Colonic mucosa (tissue), 4 donors: ENCODE measurements at regions of chr18 and their contacts with region 1.

Region 1: GRCh38 chr18:80034068-80034851 is at the start of gene RBFA:
- DNase-seq: peak; percentile 100
- H3K4me3 ChIP-seq: peak within 1 kb of the TSS; percentile 80
- H3K27ac ChIP-seq: peak within 1 kb of the TSS; percentile 74
- H3K4me1 ChIP-seq: peaks cover 4% of the 10 kb centered on the region
- H3K27me3 ChIP-seq: no peaks in the 10 kb centered on the region
- CTCF ChIP-seq: peak; percentile 51
- total RNA-seq, gene RBFA: 16.3 to 18.4 TPM

Region 2: DNA sequence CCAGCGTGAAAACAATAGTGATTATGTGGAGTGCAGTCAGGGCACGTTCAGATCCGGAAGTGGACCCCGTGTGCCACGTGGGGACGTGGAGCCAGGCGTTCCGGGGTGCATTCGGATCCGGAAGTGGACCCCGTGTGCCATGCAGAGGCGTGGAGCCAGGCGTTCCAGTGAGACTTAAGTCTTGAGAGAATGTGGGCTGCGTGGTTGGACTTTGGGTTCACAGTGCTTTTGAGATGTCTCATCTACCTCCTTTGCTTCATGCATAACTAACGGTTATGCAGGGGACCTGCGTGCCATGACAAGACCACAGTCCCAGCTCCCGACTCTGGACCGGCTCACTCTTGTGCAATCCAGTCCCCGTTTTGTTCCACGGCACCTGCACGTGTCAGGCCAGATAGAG is 325.8 kb before region 1 on chr18:
- intact Hi-C with region 1: no loop called
- DNase-seq: no peak
- H3K4me3 ChIP-seq: no peak overlapping the region
- H3K27ac ChIP-seq: no peak overlapping the region
- H3K4me1 ChIP-seq: no peaks in the 10 kb centered on the region
- H3K27me3 ChIP-seq: no peaks in the 10 kb centered on the region
- CTCF ChIP-seq: no peak

Region 3: GRCh38 chr18:79733986-79734770 is 300.1 kb before region 1 on chr18:
- intact Hi-C with region 1: no loop called
- DNase-seq: no peak
- H3K4me3 ChIP-seq: no peak overlapping the region
- H3K27ac ChIP-seq: no peak overlapping the region
- H3K4me1 ChIP-seq: no peaks in the 10 kb centered on the region
- H3K27me3 ChIP-seq: no peaks in the 10 kb centered on the region
- CTCF ChIP-seq: no peak

Region 4: DNA sequence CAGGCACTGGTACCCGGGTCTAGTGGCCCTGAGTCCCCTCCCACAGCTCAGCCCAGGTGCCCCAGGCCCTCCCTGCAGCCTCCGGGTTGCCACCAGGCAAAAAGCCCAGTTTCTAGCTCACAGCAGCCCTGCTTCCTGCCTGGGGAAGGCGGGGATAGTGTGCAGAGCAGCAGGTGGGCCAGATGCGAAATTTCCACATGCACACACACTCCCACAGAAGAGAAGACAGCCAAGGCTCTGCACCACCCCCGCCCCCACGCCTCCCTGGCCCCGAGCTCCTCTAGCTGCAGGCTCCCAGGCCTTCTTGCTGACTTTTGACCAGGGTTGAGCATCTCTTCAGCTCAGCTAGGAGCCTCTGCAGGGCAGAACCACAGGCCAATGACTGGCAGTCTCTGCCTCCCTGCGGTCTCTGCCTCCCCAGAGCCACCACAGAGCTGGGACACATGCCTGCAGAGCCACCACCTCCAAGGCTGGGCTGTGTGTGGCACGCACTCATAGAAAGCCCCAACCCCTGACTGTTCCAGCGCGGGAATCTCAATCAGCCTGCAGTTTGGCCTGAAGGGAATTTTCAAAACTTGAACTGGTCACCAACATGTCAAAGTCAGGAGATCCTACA is 90.0 kb before region 1 on chr18:
- intact Hi-C with region 1: loop called (anchors 10 kb)
- DNase-seq: peak; percentile 59
- H3K4me3 ChIP-seq: no peak overlapping the region
- H3K27ac ChIP-seq: peak overlapping the region; percentile 63
- H3K4me1 ChIP-seq: peaks cover 29% of the 10 kb centered on the region
- H3K27me3 ChIP-seq: no peaks in the 10 kb centered on the region
- CTCF ChIP-seq: no peak

Region 5: GRCh38 chr18:79982734-79983133 is 51.5 kb before region 1 on chr18:
- intact Hi-C with region 1: loop called (anchors 5 kb)
- DNase-seq: no peak
- H3K4me3 ChIP-seq: no peak overlapping the region
- H3K27ac ChIP-seq: no peak overlapping the region
- H3K4me1 ChIP-seq: peaks cover 11% of the 10 kb centered on the region
- H3K27me3 ChIP-seq: no peaks in the 10 kb centered on the region
- CTCF ChIP-seq: no peak

Region 6: GRCh38 chr18:80108728-80109675 is 74.7 kb after region 1 on chr18 and contains the start of gene ADNP2:
- intact Hi-C with region 1: loop called (anchors 5 kb)
- DNase-seq: peak; percentile 83
- H3K4me3 ChIP-seq: peak within 1 kb of the TSS; percentile 56
- H3K27ac ChIP-seq: peak within 1 kb of the TSS; percentile 12
- H3K4me1 ChIP-seq: no peaks in the 10 kb centered on the region
- H3K27me3 ChIP-seq: no peaks in the 10 kb centered on the region
- CTCF ChIP-seq: no peak
- total RNA-seq, gene ADNP2: 17.8 to 18.1 TPM

Region 7: GRCh38 chr18:80157708-80158343 is 123.6 kb after region 1 on chr18:
- intact Hi-C with region 1: loop called (anchors 10 kb)
- DNase-seq: peak; percentile 82
- H3K4me3 ChIP-seq: no peak overlapping the region
- H3K27ac ChIP-seq: no peak overlapping the region
- H3K4me1 ChIP-seq: no peaks in the 10 kb centered on the region
- H3K27me3 ChIP-seq: no peaks in the 10 kb centered on the region
- CTCF ChIP-seq: peak; percentile 97